ENCODE measurements at regions of chr12 and their contacts with region 1.

Region 1: GRCh38 chr12:56724972-56725722 is at the start of gene NACA:
- DNase-seq: peak; percentile 95

Region 2: DNA sequence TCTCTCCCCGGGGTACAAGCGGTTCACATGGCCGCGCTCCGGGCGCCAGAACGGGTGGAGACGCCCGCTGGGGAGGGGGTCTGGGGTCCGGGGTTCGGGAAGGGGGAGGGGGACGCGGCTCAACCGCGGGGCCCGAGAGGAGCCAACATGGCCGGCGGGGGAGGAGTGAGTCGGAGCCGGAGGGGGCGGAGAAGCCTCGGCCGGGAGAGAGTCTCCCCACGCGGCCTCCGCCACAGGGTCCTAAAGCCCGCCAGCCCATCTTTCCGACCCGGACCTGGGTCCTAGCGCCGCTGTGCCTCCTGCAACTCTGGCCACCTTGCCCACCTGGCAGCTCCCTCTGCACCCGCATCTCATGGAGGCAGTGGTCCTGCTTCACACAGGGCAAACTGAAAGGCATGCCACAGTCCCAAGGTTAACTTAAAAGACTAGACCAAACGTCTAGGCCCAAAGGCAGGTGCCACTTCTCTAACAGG is 95.0 kb before region 1 on chr12 and contains the start of gene BAZ2A:
- CTCF ChIA-PET with region 1: interaction called, 3 read pairs
- POLR2A ChIA-PET with region 1: interaction called, 13 read pairs
- DNase-seq: peak; percentile 91

Region 3: GRCh38 chr12:56636675-56637540 is 88.2 kb before region 1 on chr12:
- CTCF ChIA-PET with region 1: interaction called, 3 read pairs
- POLR2A ChIA-PET with region 1: interaction called, 13 read pairs
- DNase-seq: peak; percentile 92

Region 4: GRCh38 chr12:56677680-56678079 is 47.5 kb before region 1 on chr12:
- CTCF ChIA-PET with region 1: no interaction called
- POLR2A ChIA-PET with region 1: interaction called, 21 read pairs
- DNase-seq: no peak

Region 5: GRCh38 chr12:56699020-56699661 is 26.0 kb before region 1 on chr12:
- CTCF ChIA-PET with region 1: no interaction called
- POLR2A ChIA-PET with region 1: interaction called, 11 read pairs
- DNase-seq: no peak

Region 6: DNA sequence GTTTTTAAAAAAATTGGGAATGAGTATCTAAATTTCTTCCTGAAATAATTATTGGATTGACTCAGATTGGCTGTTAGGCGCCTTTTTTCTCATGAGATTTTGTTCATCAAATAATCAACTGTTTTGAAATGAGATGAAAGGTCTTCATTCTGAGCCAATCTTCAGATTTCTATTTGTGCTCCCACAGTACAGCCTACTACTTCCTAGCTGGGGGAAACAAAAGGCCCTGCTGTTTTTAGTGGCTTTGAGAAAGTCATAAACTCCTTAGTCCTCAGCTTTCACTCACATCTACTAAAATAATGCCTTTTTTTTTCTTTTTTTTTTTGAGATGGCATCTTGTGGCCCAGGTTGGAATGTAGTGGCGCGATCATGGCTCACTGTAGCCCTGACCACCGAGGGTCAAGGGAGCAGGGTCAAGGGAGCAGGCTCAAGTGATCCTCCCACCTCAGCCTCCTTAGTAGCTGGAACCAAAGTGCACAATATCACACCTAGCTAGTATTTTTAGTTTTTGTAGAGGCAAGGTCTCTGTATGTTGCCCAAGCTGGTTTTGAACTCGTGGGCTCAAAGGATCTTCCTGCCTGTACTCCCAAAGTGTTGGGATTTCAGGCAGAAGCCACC is 15.3 kb before region 1 on chr12:
- CTCF ChIA-PET with region 1: no interaction called
- POLR2A ChIA-PET with region 1: interaction called, 19 read pairs
- DNase-seq: no peak

Region 7: DNA sequence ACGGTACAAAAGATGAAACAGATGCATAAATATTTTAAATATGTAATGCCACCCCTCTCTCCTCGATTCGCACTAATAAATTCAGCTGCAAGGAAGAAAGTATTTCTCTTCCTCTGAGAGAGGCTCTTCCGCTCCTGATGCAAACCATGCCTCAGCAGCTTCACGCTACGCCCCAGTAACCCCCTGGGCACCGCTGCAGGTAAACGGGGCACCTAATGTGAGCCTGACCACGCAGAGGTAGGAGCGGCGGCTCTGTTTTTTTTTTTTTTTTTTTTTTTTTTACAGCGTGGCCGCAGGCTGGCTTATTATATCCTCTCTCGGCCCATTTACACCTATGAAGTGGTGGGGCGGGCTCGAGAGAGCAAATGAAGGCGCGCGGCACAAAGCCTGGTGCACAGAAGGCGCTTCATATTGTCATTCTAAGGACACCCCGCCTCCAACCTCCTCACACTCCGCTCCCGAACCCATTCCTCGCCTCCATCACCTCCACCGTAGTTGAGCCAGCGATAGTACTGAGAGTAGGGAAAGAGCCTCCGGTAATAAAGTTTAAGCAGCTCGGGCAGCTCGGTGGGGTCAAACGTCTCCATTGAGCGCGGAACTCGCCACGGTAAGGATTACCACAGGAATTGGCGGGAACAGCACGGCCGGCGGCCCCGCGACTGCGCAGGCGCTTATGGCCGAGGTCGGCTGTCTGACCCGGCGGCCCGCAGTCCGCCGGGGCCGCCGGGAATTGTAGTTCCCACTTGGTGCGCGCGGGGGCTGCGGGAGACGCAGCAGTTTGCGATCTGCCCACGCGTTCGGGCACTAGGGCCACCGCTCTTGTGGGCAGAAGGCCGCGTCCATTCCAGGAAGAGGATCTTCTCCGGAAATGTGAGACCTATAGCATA is 26.8 kb after region 1 on chr12 and contains the start of gene PRIM1:
- CTCF ChIA-PET with region 1: no interaction called
- POLR2A ChIA-PET with region 1: interaction called, 29 read pairs
- DNase-seq: peak; percentile 96